CD8-positive, alpha-beta memory T cell (primary cell): ENCODE measurements at regions of chr20 and their contacts with region 1.

Region 1: GRCh38 chr20:5100684-5101347 is 18.9 kb downstream of the PCNA start:
- DNase-seq: peak; percentile 53 to 81 (median 68)
- H3K4me3 ChIP-seq: no peak overlapping the region
- H3K4me3 Mint-ChIP-seq: no peak overlapping the region
- H3K27ac ChIP-seq: no peak overlapping the region
- H3K27ac Mint-ChIP-seq: peak overlapping the region in 6 of 8 donors; percentile 12 to 87 (median 73)
- H3K4me1 ChIP-seq: peaks cover 11% of the 10 kb centered on the region
- H3K4me1 Mint-ChIP-seq: peaks cover 10 to 22% (median 22%) of the 10 kb centered on the region in 3 donors
- H3K27me3 ChIP-seq: no peaks in the 10 kb centered on the region
- H3K27me3 Mint-ChIP-seq: no peaks in the 10 kb centered on the region

Region 2: DNA sequence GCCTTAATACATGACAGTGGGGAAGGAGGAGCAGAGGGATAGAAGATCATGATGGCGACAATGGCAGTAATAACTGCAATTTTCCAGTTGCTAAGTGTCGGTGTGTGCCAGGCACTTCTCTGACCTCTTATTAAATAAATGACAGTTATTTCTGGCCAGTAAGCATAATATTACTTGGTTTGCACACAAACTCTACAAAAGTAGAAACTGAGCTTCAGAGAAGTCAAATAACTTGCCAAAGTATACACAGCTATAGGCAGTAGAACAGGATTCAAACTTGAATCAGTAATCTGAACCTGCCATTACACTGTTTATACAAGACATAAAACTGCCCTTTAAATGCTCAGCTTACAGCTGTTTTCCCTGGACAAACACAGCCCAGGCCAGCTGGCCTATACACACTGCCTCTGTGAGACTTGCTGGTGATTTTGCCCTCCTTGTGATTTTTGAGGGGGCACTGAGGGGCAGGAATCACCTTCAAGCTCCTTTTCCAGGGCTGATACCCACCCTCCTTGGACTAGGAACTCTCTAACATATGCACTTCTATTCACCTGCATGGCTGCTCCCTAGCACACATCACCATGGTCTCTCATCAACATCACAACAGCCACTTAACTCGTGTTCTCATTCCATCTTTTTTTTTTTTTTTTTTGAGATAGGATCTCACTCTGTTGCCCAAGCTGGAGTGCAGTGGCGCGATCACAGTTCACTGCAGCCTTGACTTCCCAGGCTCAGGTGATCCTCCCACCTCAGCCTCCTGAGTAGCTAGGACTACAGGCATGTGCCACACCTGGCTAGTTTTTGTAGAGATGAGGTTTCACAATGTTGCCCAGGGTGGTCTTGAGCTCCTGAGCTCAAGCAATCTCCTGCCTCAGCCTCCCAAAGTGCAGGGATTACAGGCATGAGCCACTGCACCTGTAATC is 163.2 kb before region 1 on chr20:
- CTCF ChIA-PET with region 1: no interaction called
- POLR2A ChIA-PET with region 1: no interaction called
- DNase-seq: no peak
- H3K4me3 ChIP-seq: no peak overlapping the region
- H3K4me3 Mint-ChIP-seq: no peak overlapping the region
- H3K27ac ChIP-seq: no peak overlapping the region
- H3K27ac Mint-ChIP-seq: peak overlapping the region in 2 of 8 donors; percentile 29 to 40
- H3K4me1 ChIP-seq: no peaks in the 10 kb centered on the region
- H3K4me1 Mint-ChIP-seq: peaks cover 7 to 31% (median 15%) of the 10 kb centered on the region in 3 donors
- H3K27me3 ChIP-seq: no peaks in the 10 kb centered on the region
- H3K27me3 Mint-ChIP-seq: no peaks in the 10 kb centered on the region

Region 3: DNA sequence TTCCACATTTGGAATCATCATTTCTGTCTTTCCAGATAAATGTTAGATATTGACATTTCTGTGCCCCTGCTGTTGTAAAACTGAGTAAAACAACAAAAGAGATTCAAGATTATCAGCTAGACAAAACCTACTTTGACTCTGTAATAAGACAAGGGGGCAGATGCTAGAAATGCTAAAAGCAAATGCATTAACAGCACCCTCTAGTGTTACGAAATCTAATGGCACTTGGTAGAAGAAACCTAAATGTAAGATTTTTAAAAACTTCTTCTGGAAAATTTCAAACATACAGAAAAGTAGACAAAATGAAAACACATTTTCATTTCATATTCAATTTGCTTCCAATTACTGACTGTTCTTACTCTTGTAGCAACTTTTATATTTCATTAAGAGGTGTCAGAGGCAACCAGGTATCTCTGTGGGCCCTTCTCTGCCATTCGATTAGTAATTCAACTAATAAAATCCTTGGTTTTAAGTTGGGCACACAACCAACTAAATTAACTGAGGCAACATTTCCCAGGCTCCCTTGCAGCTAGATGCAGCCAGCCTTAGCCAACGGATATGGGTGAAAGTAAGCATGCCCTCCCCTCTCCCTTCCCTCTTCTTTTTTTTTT is 144.5 kb before region 1 on chr20:
- CTCF ChIA-PET with region 1: interaction called, 15 read pairs
- POLR2A ChIA-PET with region 1: no interaction called
- DNase-seq: peak in 2 of 5 donors; percentile 43 to 54
- H3K4me3 ChIP-seq: no peak overlapping the region
- H3K4me3 Mint-ChIP-seq: no peak overlapping the region
- H3K27ac ChIP-seq: no peak overlapping the region
- H3K27ac Mint-ChIP-seq: peak overlapping the region in 1 of 8 donors; percentile 48
- H3K4me1 ChIP-seq: peaks cover 2% of the 10 kb centered on the region
- H3K4me1 Mint-ChIP-seq: peaks cover 6 to 16% (median 6%) of the 10 kb centered on the region in 3 donors
- H3K27me3 ChIP-seq: no peaks in the 10 kb centered on the region
- H3K27me3 Mint-ChIP-seq: no peaks in the 10 kb centered on the region

Region 4: GRCh38 chr20:5056801-5057599 is 43.8 kb before region 1 on chr20:
- CTCF ChIA-PET with region 1: interaction called, 62 read pairs
- POLR2A ChIA-PET with region 1: interaction called, 3 read pairs
- DNase-seq: peak; percentile 60 to 85 (median 72)
- H3K4me3 ChIP-seq: no peak overlapping the region
- H3K4me3 Mint-ChIP-seq: peak overlapping the region in 6 of 7 donors; percentile 9 to 56 (median 32)
- H3K27ac ChIP-seq: no peak overlapping the region
- H3K27ac Mint-ChIP-seq: peak overlapping the region; percentile 31 to 92 (median 88)
- H3K4me1 ChIP-seq: peaks cover 26% of the 10 kb centered on the region
- H3K4me1 Mint-ChIP-seq: peaks cover 18 to 26% (median 23%) of the 10 kb centered on the region in 3 donors
- H3K27me3 ChIP-seq: no peaks in the 10 kb centered on the region
- H3K27me3 Mint-ChIP-seq: no peaks in the 10 kb centered on the region

Region 5: GRCh38 chr20:5077761-5078387 is 22.9 kb before region 1 on chr20:
- CTCF ChIA-PET with region 1: interaction called, 17 read pairs
- POLR2A ChIA-PET with region 1: interaction called, 3 read pairs
- DNase-seq: no peak
- H3K4me3 ChIP-seq: peak overlapping the region; percentile 56
- H3K4me3 Mint-ChIP-seq: peak overlapping the region; percentile 43 to 87 (median 84)
- H3K27ac ChIP-seq: peak overlapping the region; percentile 78
- H3K27ac Mint-ChIP-seq: peak overlapping the region; percentile 90 to 99 (median 96)
- H3K4me1 ChIP-seq: peaks cover 25% of the 10 kb centered on the region
- H3K4me1 Mint-ChIP-seq: peaks cover 25 to 28% (median 26%) of the 10 kb centered on the region in 3 donors
- H3K27me3 ChIP-seq: no peaks in the 10 kb centered on the region
- H3K27me3 Mint-ChIP-seq: no peaks in the 10 kb centered on the region